Transverse colon (tissue), 4 donors: ENCODE measurements at regions of chr14 and their contacts with region 1.

Region 1: DNA sequence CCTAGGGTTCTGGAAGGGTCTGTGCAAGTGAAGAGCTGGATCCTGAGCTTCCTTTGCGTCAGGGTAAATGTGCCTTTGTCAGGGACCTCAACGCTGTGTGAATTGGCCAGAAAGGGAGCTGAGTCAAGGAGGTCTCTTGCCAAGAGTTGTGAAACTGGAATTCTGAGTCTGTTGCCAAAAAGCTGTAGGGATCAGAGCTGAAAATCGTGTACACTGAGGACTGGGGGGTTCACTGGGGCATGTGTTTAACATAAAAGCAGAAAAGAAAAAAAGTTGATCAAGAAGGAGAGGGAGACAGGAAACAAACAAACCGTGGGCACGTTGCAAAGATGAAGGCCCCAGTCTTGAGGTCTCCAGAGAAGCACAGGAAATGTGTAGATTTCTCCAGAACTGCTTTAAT is 1081.5 kb downstream of the VRK1 start:
- DNase-seq: peak; percentile 10
- H3K4me3 ChIP-seq: no peak overlapping the region
- H3K27ac ChIP-seq: no peak overlapping the region
- H3K4me1 ChIP-seq: peaks cover 0 to 4% (median 0%) of the 10 kb centered on the region in 4 donors
- H3K27me3 ChIP-seq: no peaks in the 10 kb centered on the region
- CTCF ChIP-seq: no peak
- EP300 ChIP-seq: no peak
- POLR2A ChIP-seq: no peak

Region 2: DNA sequence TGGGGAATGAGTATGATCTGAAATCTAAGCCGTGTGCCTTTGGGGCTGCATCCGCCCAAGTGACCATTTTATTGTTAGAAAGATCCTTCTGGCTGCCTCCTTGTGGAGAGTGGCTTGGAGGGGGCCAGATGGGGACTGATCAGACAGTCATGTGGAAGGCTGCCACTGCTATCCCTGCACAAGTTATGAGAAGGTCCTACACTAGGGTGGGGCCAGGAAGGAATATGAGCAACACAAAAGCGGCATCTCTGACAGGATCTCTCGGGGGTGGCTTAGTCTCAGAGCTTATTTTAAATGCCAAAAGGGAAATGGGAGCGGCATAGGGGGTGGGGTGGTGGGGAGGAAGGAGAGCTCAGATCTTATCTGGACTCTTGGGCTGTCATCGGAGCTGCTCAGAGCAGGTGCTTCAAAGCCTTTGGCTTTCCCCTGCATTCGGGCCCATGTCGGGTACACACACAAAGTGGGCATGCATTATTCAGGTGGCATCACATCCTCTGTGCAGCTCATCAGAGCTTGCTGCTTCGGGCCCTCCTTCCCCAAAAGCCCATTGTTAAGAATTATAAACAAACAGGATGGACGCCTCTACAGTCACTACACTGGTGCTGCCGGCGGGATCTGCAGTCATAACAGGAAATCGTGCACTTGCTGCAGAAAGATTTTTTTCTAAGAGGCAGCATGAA is 276.1 kb before region 1 on chr14:
- in situ Hi-C with region 1: no loop called
- intact Hi-C with region 1: no loop called
- DNase-seq: peak; percentile 29
- H3K4me3 ChIP-seq: no peak overlapping the region
- H3K27ac ChIP-seq: peak overlapping the region in 2 of 4 donors; percentile 12 to 48
- H3K4me1 ChIP-seq: no peaks in the 10 kb centered on the region
- H3K27me3 ChIP-seq: no peaks in the 10 kb centered on the region
- CTCF ChIP-seq: no peak
- EP300 ChIP-seq: no peak
- POLR2A ChIP-seq: no peak

Region 3: DNA sequence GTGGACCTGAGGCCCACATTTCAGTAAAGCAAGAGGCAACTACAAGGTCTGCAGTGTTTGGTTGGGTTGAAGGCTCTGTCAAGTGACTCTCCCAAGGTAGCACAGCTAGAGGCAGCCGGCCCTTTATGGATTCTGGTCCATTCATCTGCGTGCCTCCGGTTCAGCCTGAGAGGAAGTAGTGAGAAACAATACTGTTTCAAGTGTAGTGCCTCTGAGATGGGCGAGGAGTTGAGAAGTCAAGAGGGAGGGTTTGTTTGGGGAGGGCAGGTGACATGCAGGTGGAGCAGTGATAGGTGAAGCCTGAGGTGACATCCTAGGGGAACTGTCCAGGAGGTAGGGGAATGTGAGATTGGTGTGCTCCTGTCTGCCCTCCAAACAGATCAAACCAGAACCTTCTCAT is 148.0 kb before region 1 on chr14:
- in situ Hi-C with region 1: no loop called
- intact Hi-C with region 1: no loop called
- DNase-seq: no peak
- H3K4me3 ChIP-seq: no peak overlapping the region
- H3K27ac ChIP-seq: no peak overlapping the region
- H3K4me1 ChIP-seq: no peaks in the 10 kb centered on the region
- H3K27me3 ChIP-seq: no peaks in the 10 kb centered on the region
- CTCF ChIP-seq: no peak
- EP300 ChIP-seq: no peak
- POLR2A ChIP-seq: no peak

Region 4: GRCh38 chr14:98138666-98139065 is 259.9 kb after region 1 on chr14:
- in situ Hi-C with region 1: no loop called
- intact Hi-C with region 1: no loop called
- DNase-seq: peak; percentile 10
- H3K4me3 ChIP-seq: no peak overlapping the region
- H3K27ac ChIP-seq: no peak overlapping the region
- H3K4me1 ChIP-seq: no peaks in the 10 kb centered on the region
- H3K27me3 ChIP-seq: peaks cover 41% of the 10 kb centered on the region
- CTCF ChIP-seq: peak; percentile 46 to 61 (median 53)
- EP300 ChIP-seq: no peak
- POLR2A ChIP-seq: no peak

Region 5: DNA sequence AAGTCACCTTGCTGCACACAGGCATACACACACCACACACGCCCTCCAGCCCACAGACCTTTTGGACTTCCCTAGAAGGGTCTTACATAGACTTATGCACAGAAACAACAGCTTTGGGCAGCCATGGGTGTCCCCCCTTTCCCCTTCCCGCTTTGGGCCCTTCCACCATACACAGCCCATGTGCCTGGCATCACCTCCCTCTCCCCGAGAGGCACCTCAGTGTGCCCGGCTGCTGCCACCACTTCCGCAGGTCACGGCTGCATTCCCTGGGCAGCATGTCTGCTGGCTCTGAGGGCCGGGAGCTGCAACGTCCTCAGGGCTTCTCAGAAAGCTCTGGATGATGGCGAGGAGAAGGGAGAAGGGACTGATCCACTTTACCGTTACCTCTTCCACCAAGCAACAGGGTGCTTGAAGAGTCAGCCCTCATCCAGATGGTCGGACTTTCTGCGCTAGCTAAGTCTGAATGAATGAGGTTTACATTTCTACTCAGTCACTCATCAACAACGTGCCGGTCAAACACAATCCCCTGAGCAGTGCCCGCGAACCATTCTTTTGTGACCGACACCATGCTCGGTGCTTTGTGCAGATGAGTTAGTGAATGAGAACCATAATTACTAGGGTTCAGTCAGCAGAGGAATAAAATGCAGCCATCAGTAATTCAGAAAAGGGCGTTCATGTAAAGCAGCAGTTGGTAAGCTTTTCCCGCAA is 1465.5 kb after region 1 on chr14:
- in situ Hi-C with region 1: no loop called
- intact Hi-C with region 1: loop called (anchors 5 kb)
- DNase-seq: no peak
- H3K4me3 ChIP-seq: no peak overlapping the region
- H3K27ac ChIP-seq: no peak overlapping the region
- H3K4me1 ChIP-seq: no peaks in the 10 kb centered on the region
- H3K27me3 ChIP-seq: no peaks in the 10 kb centered on the region
- CTCF ChIP-seq: no peak
- EP300 ChIP-seq: no peak
- POLR2A ChIP-seq: no peak